Pancreas (tissue), 10 donors: ENCODE measurements at regions of chr3 and their contacts with region 1.

Region 1: DNA sequence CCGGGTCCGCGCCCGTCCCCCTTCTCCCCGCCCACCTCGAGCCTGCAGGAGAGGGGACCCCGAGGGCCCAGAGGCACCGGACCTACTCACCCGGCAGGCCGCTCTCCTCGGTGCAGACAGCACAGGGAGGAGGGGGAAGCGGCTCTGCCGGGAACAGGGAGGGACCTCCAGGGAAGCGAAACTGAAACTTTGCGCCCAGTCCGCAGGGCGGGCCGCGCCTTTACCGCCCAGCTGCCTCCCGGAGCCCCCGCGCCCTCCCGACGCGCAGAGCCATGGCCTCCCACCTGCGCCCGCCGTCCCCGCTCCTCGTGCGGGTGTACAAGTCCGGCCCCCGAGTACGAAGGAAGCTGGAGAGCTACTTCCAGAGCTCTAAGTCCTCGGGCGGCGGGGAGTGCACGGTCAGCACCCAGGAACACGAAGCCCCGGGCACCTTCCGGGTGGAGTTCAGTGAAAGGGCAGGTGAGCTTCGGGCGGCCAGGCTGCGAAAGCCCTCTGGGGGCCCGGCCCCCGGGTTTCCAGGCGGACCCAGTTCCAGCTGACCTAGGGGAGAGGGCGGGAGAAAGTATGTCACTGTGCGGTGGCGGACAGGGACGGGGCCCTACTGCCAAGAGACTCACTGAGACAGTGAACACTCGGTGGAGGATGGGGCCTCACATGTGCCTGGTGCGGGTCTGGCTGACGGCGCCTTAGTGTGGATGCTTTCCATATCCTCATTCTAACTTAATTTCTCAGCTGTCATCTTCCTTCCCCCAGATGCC is at the starts of genes DTX3L and PARP9:
- DNase-seq: peak; percentile 77 to 90 (median 84)
- ATAC-seq: peak; percentile 94 to 98 (median 96)
- H3K4me3 ChIP-seq: peak within 1 kb of the TSS; percentile 55 to 78 (median 70)
- H3K27ac ChIP-seq: peak within 1 kb of the TSS; percentile 84 to 93 (median 90)
- H3K4me1 ChIP-seq: peaks cover 7 to 29% (median 7%) of the 10 kb centered on the region in 3 donors
- H3K27me3 ChIP-seq: no peaks in the 10 kb centered on the region
- CTCF ChIP-seq: no peak
- total RNA-seq, gene DTX3L: 15.3 to 36.6 (median 21.1) TPM
- total RNA-seq, gene PARP9: 8.6 to 22.7 (median 13.3) TPM

Region 2: GRCh38 chr3:122661633-122662032 is 97.3 kb after region 1 on chr3:
- intact Hi-C with region 1: loop called in 1 of 3 experiments (anchors 5 kb)
- DNase-seq: no peak
- ATAC-seq: no peak
- H3K4me3 ChIP-seq: no peak overlapping the region
- H3K27ac ChIP-seq: no peak overlapping the region
- H3K4me1 ChIP-seq: no peaks in the 10 kb centered on the region
- H3K27me3 ChIP-seq: no peaks in the 10 kb centered on the region
- CTCF ChIP-seq: no peak

Region 3: GRCh38 chr3:122679085-122679881 is 114.9 kb after region 1 on chr3:
- intact Hi-C with region 1: loop called in 2 of 3 experiments (anchors 5 kb)
- DNase-seq: peak; percentile 70 to 81 (median 78)
- ATAC-seq: peak; percentile 67 to 86 (median 76)
- H3K4me3 ChIP-seq: peak overlapping the region in 2 of 4 donors; percentile 58 to 80
- H3K27ac ChIP-seq: peak overlapping the region; percentile 74 to 96 (median 88)
- H3K4me1 ChIP-seq: peaks cover 0 to 16% (median 0%) of the 10 kb centered on the region in 3 donors
- H3K27me3 ChIP-seq: no peaks in the 10 kb centered on the region
- CTCF ChIP-seq: peak; percentile 36 to 65 (median 58)